CD4-positive, alpha-beta T cell (primary cell): ENCODE measurements at regions of chr7 and their contacts with region 1.

Region 1: DNA sequence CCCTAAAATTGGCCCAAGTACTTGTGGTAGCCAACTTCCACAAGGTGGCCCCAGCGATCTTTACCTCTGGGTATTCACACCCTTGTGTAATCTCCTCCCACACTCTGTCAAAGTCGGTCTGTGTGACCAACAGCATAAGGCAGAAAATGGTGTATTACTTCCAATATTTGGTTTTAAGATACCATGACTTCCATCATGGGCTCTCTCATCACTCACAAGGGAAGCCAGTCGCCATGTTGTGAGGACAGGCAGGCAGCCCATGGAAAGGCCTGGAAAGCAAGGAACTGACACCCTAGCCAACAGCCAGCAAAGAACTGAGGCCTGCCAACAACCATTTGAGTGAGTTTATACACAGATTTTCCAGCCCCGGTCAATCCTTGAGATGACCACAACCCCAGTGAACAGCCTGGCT is 91.0 kb upstream of the KMT2E start:
- DNase-seq: peak; percentile 47 to 89 (median 65)
- ATAC-seq: peak; percentile 95
- H3K4me3 ChIP-seq: no peak overlapping the region
- H3K4me3 Mint-ChIP-seq: no peak overlapping the region
- H3K27ac ChIP-seq: no peak overlapping the region
- H3K27ac Mint-ChIP-seq: no peak overlapping the region
- H3K4me1 ChIP-seq: peaks cover 6% of the 10 kb centered on the region
- H3K4me1 Mint-ChIP-seq: no peaks in the 10 kb centered on the region
- H3K27me3 ChIP-seq: no peaks in the 10 kb centered on the region
- H3K27me3 Mint-ChIP-seq: no peaks in the 10 kb centered on the region
- CTCF ChIP-seq: peak; percentile 76

Region 2: DNA sequence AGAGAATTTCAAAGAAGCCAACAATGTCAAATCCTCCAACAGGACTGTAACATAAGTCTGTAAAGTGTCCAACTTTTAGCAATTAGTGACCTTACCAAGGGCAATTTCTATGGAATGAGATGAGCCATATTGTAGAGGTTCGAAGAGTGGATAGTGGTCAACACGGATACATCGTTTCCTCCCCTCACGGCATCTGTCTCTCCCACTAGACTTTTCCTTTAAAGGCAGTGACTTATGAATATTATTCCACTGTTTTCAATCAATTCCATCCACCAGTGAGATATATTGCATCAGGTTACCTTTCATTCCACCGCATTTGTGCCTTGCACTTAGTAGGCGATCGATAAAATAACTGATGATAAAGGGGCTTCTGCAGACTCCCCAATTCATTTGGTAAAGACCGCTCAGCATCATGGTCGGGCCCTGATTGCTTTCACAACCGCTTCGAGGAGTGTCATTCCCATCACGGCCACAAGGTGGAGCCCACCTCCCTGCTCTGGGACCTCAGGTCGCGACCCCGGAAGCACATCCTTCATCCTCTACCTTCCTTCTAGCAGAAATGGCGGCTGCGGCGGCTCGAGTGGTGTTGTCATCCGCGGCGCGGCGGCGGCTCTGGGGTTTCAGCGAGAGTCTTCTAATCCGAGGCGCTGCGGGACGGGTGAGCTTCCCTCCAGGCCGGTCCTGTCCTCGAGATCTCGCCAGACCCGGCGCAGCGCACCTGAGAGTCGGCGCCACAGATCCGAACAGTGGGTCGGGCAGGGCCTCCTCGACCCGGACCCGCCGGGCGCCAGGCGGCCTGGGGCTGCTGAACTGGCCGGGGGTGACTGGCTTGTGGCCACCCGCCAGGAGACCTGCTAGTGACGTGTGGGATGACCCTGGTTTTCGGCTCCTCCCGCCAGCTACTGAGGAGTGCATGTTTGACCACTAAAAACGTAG is 1625.8 kb before region 1 on chr7 and contains the start of gene PMPCB:
- CTCF ChIA-PET with region 1: no interaction called
- POLR2A ChIA-PET with region 1: no interaction called
- intact Hi-C with region 1: loop called (anchors 5 kb)
- DNase-seq: peak; percentile 93 to 98 (median 96)
- ATAC-seq: peak; percentile 99
- H3K4me3 ChIP-seq: peak within 1 kb of the TSS; percentile 80
- H3K4me3 Mint-ChIP-seq: peak within 1 kb of the TSS; percentile 94
- H3K27ac ChIP-seq: peak within 1 kb of the TSS; percentile 80 to 87
- H3K27ac Mint-ChIP-seq: peak within 1 kb of the TSS; percentile 85
- H3K4me1 ChIP-seq: peaks cover 20% of the 10 kb centered on the region
- H3K4me1 Mint-ChIP-seq: peaks cover 42% of the 10 kb centered on the region
- H3K27me3 ChIP-seq: no peaks in the 10 kb centered on the region
- H3K27me3 Mint-ChIP-seq: no peaks in the 10 kb centered on the region
- CTCF ChIP-seq: peak; percentile 88
- total RNA-seq, gene PMPCB: 101 to 103 TPM

Region 3: DNA sequence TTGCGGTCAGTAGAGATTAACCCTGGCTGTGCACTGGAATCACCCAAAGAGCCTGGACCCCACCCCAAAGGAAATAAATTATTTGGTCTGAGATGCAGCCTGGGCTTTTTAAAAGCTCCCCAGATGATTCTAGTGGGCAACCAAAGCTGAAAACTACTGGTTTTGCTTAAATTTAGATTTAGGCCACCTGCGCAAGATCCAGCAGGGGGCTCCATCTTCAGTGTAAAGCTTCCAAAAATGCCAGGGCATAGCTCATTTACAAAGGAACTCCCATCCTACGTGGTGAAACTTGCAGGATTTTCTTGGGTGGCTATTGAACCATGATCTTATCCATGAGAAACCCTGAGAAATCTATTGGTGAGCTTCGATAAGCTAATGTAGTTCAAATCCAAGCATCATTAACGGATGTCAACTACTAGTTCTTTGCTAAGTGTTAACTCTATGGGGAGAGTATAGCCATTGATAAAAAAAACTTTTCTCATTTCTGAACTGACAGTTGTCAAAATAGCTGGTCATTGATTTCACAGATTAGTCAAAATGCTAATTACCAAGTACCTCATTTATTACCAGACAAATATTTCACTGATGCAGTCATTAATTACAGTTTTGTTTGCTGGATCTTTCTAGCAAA is 279.3 kb before region 1 on chr7:
- CTCF ChIA-PET with region 1: no interaction called
- POLR2A ChIA-PET with region 1: no interaction called
- intact Hi-C with region 1: loop called (anchors 5 kb)
- DNase-seq: no peak
- ATAC-seq: no peak
- H3K4me3 ChIP-seq: no peak overlapping the region
- H3K4me3 Mint-ChIP-seq: no peak overlapping the region
- H3K27ac ChIP-seq: no peak overlapping the region
- H3K27ac Mint-ChIP-seq: no peak overlapping the region
- H3K4me1 ChIP-seq: no peaks in the 10 kb centered on the region
- H3K4me1 Mint-ChIP-seq: no peaks in the 10 kb centered on the region
- H3K27me3 ChIP-seq: peaks cover 3 to 8% of the 10 kb centered on the region in 2 experiments
- H3K27me3 Mint-ChIP-seq: peaks cover 41% of the 10 kb centered on the region
- CTCF ChIP-seq: no peak

Region 4: GRCh38 chr7:104943502-104944343 is 20.7 kb after region 1 on chr7:
- CTCF ChIA-PET with region 1: interaction called, 4 read pairs
- POLR2A ChIA-PET with region 1: interaction called, 3 read pairs
- intact Hi-C with region 1: loop called in 1 of 2 experiments (anchors 2 kb)
- DNase-seq: peak; percentile 33 to 87 (median 53)
- ATAC-seq: peak; percentile 34
- H3K4me3 ChIP-seq: peak overlapping the region; percentile 5
- H3K4me3 Mint-ChIP-seq: peak overlapping the region; percentile 91
- H3K27ac ChIP-seq: peak overlapping the region; percentile 97 to 98
- H3K27ac Mint-ChIP-seq: peak overlapping the region; percentile 100
- H3K4me1 ChIP-seq: peaks cover 67% of the 10 kb centered on the region
- H3K4me1 Mint-ChIP-seq: peaks cover 73% of the 10 kb centered on the region
- H3K27me3 ChIP-seq: no peaks in the 10 kb centered on the region
- H3K27me3 Mint-ChIP-seq: no peaks in the 10 kb centered on the region
- CTCF ChIP-seq: no peak

Region 5: GRCh38 chr7:105013221-105013815 is 90.3 kb after region 1 on chr7:
- CTCF ChIA-PET with region 1: no interaction called
- POLR2A ChIA-PET with region 1: no interaction called
- intact Hi-C with region 1: no loop called
- DNase-seq: peak; percentile 90 to 98 (median 96)
- ATAC-seq: peak; percentile 59
- H3K4me3 ChIP-seq: peak overlapping the region; percentile 84
- H3K4me3 Mint-ChIP-seq: peak overlapping the region; percentile 97
- H3K27ac ChIP-seq: peak overlapping the region; percentile 100
- H3K27ac Mint-ChIP-seq: peak overlapping the region; percentile 100
- H3K4me1 ChIP-seq: peaks cover 13% of the 10 kb centered on the region
- H3K4me1 Mint-ChIP-seq: peaks cover 50% of the 10 kb centered on the region
- H3K27me3 ChIP-seq: no peaks in the 10 kb centered on the region
- H3K27me3 Mint-ChIP-seq: peaks cover 13% of the 10 kb centered on the region
- CTCF ChIP-seq: no peak

Region 6: GRCh38 chr7:105046414-105046813 is 123.4 kb after region 1 on chr7:
- CTCF ChIA-PET with region 1: interaction called, 6 read pairs
- POLR2A ChIA-PET with region 1: no interaction called
- intact Hi-C with region 1: loop called (anchors 2 to 5 kb)
- DNase-seq: no peak
- ATAC-seq: no peak
- H3K4me3 ChIP-seq: no peak overlapping the region
- H3K4me3 Mint-ChIP-seq: peak overlapping the region; percentile 20
- H3K27ac ChIP-seq: no peak overlapping the region
- H3K27ac Mint-ChIP-seq: no peak overlapping the region
- H3K4me1 ChIP-seq: peaks cover 20% of the 10 kb centered on the region
- H3K4me1 Mint-ChIP-seq: peaks cover 65% of the 10 kb centered on the region
- H3K27me3 ChIP-seq: no peaks in the 10 kb centered on the region
- H3K27me3 Mint-ChIP-seq: no peaks in the 10 kb centered on the region
- CTCF ChIP-seq: no peak

Region 7: DNA sequence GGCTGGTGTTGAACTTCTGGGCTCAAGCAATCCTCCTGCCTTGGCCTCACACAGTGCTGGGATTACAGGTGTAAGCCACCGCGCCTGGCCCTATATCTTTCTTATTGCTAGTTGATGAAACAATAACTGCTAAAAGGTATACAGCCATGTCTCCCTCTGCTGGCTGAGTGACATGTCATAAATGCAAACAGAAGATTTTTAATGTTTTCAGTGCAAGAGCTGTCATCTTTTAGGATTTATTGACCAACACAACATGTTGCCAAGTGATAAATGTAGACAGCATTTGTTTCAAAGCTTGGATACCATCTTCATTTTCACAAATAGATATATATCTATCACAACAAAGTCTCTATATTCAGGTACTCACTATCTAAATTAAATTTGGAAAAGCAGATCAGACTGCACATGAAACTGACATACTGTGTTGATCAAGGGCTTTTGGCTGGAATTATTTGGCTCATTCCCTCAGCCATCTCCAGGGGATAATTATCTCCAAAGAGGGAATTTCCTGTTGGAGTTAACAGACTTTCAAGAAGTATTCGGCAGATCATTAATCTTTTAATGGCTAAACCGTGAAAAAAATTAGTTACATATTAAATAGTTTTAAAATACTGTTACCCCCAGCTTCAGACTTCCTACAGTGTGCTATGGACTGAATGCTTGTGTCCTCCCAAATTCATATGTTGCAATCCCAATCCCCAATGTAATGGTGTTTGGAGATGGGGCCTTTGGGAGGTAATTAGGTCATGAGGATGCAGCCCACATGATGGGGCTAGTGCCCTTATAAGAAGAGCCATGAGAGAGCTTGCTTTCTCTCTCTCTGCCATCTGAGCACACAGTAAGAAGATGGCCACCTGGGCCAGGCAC is 507.0 kb after region 1 on chr7:
- CTCF ChIA-PET with region 1: no interaction called
- POLR2A ChIA-PET with region 1: no interaction called
- intact Hi-C with region 1: loop called (anchors 2 to 5 kb)
- DNase-seq: peak; percentile 23 to 78 (median 45)
- ATAC-seq: peak; percentile 76
- H3K4me3 ChIP-seq: no peak overlapping the region
- H3K4me3 Mint-ChIP-seq: no peak overlapping the region
- H3K27ac ChIP-seq: no peak overlapping the region
- H3K27ac Mint-ChIP-seq: no peak overlapping the region
- H3K4me1 ChIP-seq: peaks cover 3% of the 10 kb centered on the region
- H3K4me1 Mint-ChIP-seq: peaks cover 7% of the 10 kb centered on the region
- H3K27me3 ChIP-seq: no peaks in the 10 kb centered on the region
- H3K27me3 Mint-ChIP-seq: no peaks in the 10 kb centered on the region
- CTCF ChIP-seq: peak; percentile 72

Region 8: DNA sequence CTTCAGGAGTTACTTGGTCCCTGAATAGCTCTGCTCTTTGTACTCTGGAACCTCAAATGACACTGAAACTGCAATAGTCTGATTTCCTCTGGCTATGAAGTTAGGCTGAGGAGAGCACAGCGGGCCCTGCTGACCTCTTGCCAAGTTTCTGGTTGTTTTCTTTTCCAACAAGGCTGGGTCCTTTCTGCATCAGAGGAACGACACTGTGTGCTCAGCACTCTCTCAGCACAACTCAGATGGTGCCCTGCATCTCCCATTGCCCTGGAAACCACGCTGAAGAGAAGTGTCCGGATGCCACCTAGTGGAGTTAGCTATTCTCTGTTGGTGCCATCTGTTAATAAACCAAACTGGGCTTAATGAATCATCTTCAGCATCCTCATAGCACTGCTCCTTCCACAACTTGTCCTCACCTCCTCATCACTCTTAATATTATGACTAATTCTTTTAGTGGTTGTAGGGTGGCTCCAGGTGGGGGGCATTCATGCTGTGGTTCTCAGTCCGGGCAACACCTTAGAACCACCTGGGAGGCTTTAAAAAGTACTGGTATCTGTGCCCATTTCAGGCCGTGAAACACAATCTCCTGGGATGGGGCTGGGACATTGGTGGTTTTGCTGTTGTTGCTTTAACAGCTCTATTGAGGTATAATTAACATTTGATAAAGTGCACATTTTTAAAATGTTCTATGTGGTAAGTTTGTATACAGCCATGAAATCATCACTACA is 666.5 kb after region 1 on chr7:
- CTCF ChIA-PET with region 1: no interaction called
- POLR2A ChIA-PET with region 1: no interaction called
- intact Hi-C with region 1: loop called in 1 of 2 experiments (anchors 5 kb)
- DNase-seq: peak; percentile 25 to 71 (median 32)
- ATAC-seq: peak; percentile 91
- H3K4me3 ChIP-seq: no peak overlapping the region
- H3K4me3 Mint-ChIP-seq: no peak overlapping the region
- H3K27ac ChIP-seq: no peak overlapping the region
- H3K27ac Mint-ChIP-seq: no peak overlapping the region
- H3K4me1 ChIP-seq: peaks cover 8% of the 10 kb centered on the region
- H3K4me1 Mint-ChIP-seq: peaks cover 10% of the 10 kb centered on the region
- H3K27me3 ChIP-seq: no peaks in the 10 kb centered on the region
- H3K27me3 Mint-ChIP-seq: no peaks in the 10 kb centered on the region
- CTCF ChIP-seq: peak; percentile 63